ENCODE measurements at regions of chr7 and their contacts with region 1.

Region 1: DNA sequence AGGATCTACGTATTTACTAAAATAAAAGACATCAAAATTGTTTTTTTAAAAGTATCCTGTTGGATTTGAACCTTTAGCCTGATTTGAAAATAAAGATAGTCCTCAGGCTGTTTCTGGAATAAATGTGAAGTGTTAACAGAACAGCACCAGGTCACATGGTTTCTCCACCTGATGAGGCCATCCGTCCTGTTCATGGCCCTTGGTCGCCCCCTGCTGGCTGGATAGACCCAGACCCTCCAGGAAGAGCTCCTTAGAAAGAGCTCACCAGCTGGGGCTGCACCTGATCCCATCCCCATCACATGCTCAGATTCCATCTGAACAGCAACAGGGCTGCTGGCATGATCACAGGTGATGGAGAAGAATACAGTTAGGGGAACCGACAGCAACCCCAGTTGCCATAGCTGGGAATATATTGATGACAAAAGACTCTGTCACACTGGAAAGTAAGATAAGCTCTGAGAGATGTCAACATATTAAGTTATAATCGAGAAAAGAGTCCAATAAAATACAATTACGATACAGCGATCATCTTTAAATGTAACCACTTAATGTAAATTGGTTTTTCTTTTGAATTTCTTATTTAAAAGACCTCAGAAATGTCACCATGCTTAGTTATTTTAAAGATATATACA is 4.8 kb downstream of the OR2A14 start:
- DNase-seq: peak; percentile 75
- ATAC-seq: peak; percentile 100
- H3K4me3 Mint-ChIP-seq: no peak overlapping the region
- H3K27ac Mint-ChIP-seq: no peak overlapping the region
- H3K4me1 Mint-ChIP-seq: no peaks in the 10 kb centered on the region
- H3K27me3 Mint-ChIP-seq: no peaks in the 10 kb centered on the region
- CTCF ChIP-seq: peak; percentile 84

Region 2: GRCh38 chr7:143416565-143417149 is 711.2 kb before region 1 on chr7:
- CTCF ChIA-PET with region 1: interaction called, 7 read pairs
- POLR2A ChIA-PET with region 1: no interaction called
- intact Hi-C with region 1: loop called (anchors 1 kb)
- DNase-seq: no peak
- ATAC-seq: no peak
- H3K4me3 Mint-ChIP-seq: no peak overlapping the region
- H3K27ac Mint-ChIP-seq: no peak overlapping the region
- H3K4me1 Mint-ChIP-seq: no peaks in the 10 kb centered on the region
- H3K27me3 Mint-ChIP-seq: peaks cover 37% of the 10 kb centered on the region
- CTCF ChIP-seq: peak; percentile 58

Region 3: GRCh38 chr7:143490717-143491306 is 637.0 kb before region 1 on chr7:
- CTCF ChIA-PET with region 1: interaction called, 3 read pairs
- POLR2A ChIA-PET with region 1: no interaction called
- intact Hi-C with region 1: loop called (anchors 1 kb)
- DNase-seq: no peak
- ATAC-seq: no peak
- H3K4me3 Mint-ChIP-seq: no peak overlapping the region
- H3K27ac Mint-ChIP-seq: no peak overlapping the region
- H3K4me1 Mint-ChIP-seq: no peaks in the 10 kb centered on the region
- H3K27me3 Mint-ChIP-seq: peaks cover 11% of the 10 kb centered on the region
- CTCF ChIP-seq: no peak

Region 4: DNA sequence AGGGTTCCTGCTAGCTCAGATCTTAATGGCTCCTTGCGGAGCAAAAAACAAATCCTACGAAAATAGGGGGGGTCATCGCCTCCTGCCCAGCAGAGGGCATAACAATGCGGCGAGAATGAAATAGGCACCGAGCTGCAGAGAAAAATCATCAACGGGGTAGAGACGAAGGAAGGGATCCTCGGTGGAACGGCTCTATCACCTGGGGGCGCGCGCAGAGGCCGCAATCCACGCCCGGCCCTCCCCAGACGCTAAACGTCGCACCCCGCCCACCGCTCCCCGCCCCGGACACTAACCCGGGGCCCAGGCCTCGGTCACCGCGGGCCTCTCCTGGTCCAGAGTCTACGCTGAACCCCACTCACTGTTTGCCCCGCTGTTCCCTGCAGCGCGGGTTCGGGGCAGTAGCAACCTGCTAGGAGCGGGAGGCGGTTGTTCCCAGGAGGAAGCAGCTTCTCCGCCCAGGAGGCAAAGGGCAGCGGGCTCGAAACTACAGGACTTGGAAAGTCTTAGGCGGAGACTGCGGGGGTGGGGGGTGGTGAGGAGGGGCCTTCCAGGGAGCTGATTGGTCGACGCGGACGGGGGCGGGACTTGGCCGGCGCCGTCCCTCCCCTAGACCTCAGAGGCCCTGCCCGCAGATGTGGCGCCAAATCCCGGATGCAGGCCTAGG is 226.0 kb before region 1 on chr7 and contains the start of gene TCAF1:
- CTCF ChIA-PET with region 1: interaction called, 4 read pairs
- POLR2A ChIA-PET with region 1: interaction called, 3 read pairs
- intact Hi-C with region 1: loop called (anchors 1 kb)
- DNase-seq: peak; percentile 85
- ATAC-seq: peak; percentile 96
- H3K4me3 Mint-ChIP-seq: peak within 1 kb of the TSS; percentile 94
- H3K27ac Mint-ChIP-seq: peak within 1 kb of the TSS; percentile 88
- H3K4me1 Mint-ChIP-seq: peaks cover 23% of the 10 kb centered on the region
- H3K27me3 Mint-ChIP-seq: no peaks in the 10 kb centered on the region
- CTCF ChIP-seq: no peak
- total RNA-seq, gene TCAF1: 12.0 and 13.4 TPM in 2 replicates

Region 5: GRCh38 chr7:144792050-144792449 is 664.2 kb after region 1 on chr7:
- CTCF ChIA-PET with region 1: no interaction called
- POLR2A ChIA-PET with region 1: no interaction called
- intact Hi-C with region 1: no loop called
- DNase-seq: no peak
- ATAC-seq: no peak
- H3K4me3 Mint-ChIP-seq: no peak overlapping the region
- H3K27ac Mint-ChIP-seq: no peak overlapping the region
- H3K4me1 Mint-ChIP-seq: no peaks in the 10 kb centered on the region
- H3K27me3 Mint-ChIP-seq: no peaks in the 10 kb centered on the region
- CTCF ChIP-seq: no peak

Measured in activated B cell treated with CpG ODN at 0.5 μM for 24 hours (primary cell).